Ascending aorta (tissue), 2 donors: ENCODE measurements at regions of chr7 and their contacts with region 1.

Region 1: DNA sequence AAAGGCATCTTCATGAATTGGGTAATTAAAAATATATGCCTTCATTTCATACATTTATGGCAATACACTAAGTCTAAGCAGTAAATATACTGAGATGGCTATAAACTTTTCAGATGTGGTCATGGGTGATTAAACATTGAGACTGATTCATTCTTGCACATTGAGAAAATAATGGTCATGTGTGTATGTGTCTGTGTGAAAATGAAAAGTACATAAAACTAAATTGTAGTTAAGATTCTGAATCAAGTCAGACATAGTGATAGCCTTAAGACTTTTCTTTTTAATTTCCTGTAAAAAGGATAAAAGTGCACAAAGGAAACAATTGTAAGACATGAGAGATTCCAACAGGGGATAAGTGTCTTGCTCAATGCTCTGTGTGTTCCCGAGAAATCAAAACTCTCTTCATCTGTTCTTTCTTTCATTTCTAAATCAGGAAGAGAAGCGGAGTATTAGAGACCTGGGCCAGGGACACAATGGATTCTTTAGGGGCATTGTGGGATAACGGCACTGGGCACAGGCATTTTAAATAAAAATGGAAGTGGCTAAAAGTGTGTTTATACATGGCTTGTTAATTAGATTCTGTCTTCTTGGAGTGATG is 69.8 kb upstream of the AGR3 start:
- DNase-seq: no peak
- H3K4me3 ChIP-seq: peak overlapping the region in 1 of 2 donors; percentile 22
- H3K27ac ChIP-seq: no peak overlapping the region
- H3K4me1 ChIP-seq: peaks cover 4 to 10% of the 10 kb centered on the region in 2 donors
- H3K27me3 ChIP-seq: no peaks in the 10 kb centered on the region
- CTCF ChIP-seq: no peak

Region 2: GRCh38 chr7:16891338-16891737 is 60.2 kb before region 1 on chr7:
- intact Hi-C with region 1: loop called (anchors 10 kb)
- DNase-seq: no peak
- H3K4me3 ChIP-seq: no peak overlapping the region
- H3K27ac ChIP-seq: no peak overlapping the region
- H3K4me1 ChIP-seq: no peaks in the 10 kb centered on the region
- H3K27me3 ChIP-seq: no peaks in the 10 kb centered on the region
- CTCF ChIP-seq: peak; percentile 31 to 45 (median 37)

Region 3: GRCh38 chr7:17095001-17095574 is 143.5 kb after region 1 on chr7:
- intact Hi-C with region 1: no loop called
- DNase-seq: no peak
- H3K4me3 ChIP-seq: no peak overlapping the region
- H3K27ac ChIP-seq: no peak overlapping the region
- H3K4me1 ChIP-seq: no peaks in the 10 kb centered on the region
- H3K27me3 ChIP-seq: no peaks in the 10 kb centered on the region
- CTCF ChIP-seq: no peak